GM12878 (cell line): ENCODE measurements at regions of chr6 and their contacts with region 1.

Region 1: GRCh38 chr6:122730775-122731386 is 48.6 kb upstream of the FABP7 start:
- DNase-seq: no peak
- ATAC-seq: peak; percentile 61
- H3K4me3 ChIP-seq: no peak overlapping the region
- H3K27ac ChIP-seq: no peak overlapping the region
- H3K4me1 ChIP-seq: no peaks in the 10 kb centered on the region
- H3K27me3 ChIP-seq: no peaks in the 10 kb centered on the region
- CTCF ChIP-seq: peak; percentile 61 to 77 (median 65)
- EP300 ChIP-seq: no peak
- POLR2A ChIP-seq: no peak
- RAD21 ChIP-seq: peak; percentile 86

Region 2: GRCh38 chr6:122530440-122531046 is 200.3 kb before region 1 on chr6:
- CTCF ChIA-PET with region 1: interaction called, 57 read pairs
- POLR2A ChIA-PET with region 1: no interaction called
- RAD21 ChIA-PET with region 1: interaction called, 14 read pairs
- SMC1A ChIA-PET with region 1: interaction called, 11 read pairs
- in situ Hi-C with region 1: no loop called
- intact Hi-C with region 1: loop called (anchors 1 kb)
- DNase-seq: peak; percentile 27
- ATAC-seq: peak; percentile 96
- H3K4me3 ChIP-seq: no peak overlapping the region
- H3K27ac ChIP-seq: no peak overlapping the region
- H3K4me1 ChIP-seq: no peaks in the 10 kb centered on the region
- H3K27me3 ChIP-seq: no peaks in the 10 kb centered on the region
- CTCF ChIP-seq: peak; percentile 89 to 94 (median 90)
- EP300 ChIP-seq: no peak
- POLR2A ChIP-seq: no peak
- RAD21 ChIP-seq: peak; percentile 96

Region 3: GRCh38 chr6:122696079-122696478 is 34.8 kb before region 1 on chr6:
- CTCF ChIA-PET with region 1: interaction called, 10 read pairs
- POLR2A ChIA-PET with region 1: no interaction called
- RAD21 ChIA-PET with region 1: interaction called, 4 read pairs
- SMC1A ChIA-PET with region 1: interaction called, 4 read pairs
- in situ Hi-C with region 1: no loop called
- intact Hi-C with region 1: no loop called
- DNase-seq: no peak
- ATAC-seq: no peak
- H3K4me3 ChIP-seq: no peak overlapping the region
- H3K27ac ChIP-seq: no peak overlapping the region
- H3K4me1 ChIP-seq: no peaks in the 10 kb centered on the region
- H3K27me3 ChIP-seq: no peaks in the 10 kb centered on the region
- CTCF ChIP-seq: no peak
- EP300 ChIP-seq: no peak
- POLR2A ChIP-seq: no peak
- RAD21 ChIP-seq: no peak

Region 4: GRCh38 chr6:122751326-122751725 is 20.4 kb after region 1 on chr6:
- CTCF ChIA-PET with region 1: interaction called, 133 read pairs
- POLR2A ChIA-PET with region 1: no interaction called
- RAD21 ChIA-PET with region 1: interaction called, 32 read pairs
- SMC1A ChIA-PET with region 1: interaction called, 45 read pairs
- in situ Hi-C with region 1: no loop called
- intact Hi-C with region 1: no loop called
- DNase-seq: no peak
- ATAC-seq: peak; percentile 75
- H3K4me3 ChIP-seq: no peak overlapping the region
- H3K27ac ChIP-seq: no peak overlapping the region
- H3K4me1 ChIP-seq: 0 out of 2 replicates have a peak, but pooled peaks cover 3% of the 10 kb centered on the region
- H3K27me3 ChIP-seq: no peaks in the 10 kb centered on the region
- CTCF ChIP-seq: no peak
- EP300 ChIP-seq: no peak
- POLR2A ChIP-seq: no peak
- RAD21 ChIP-seq: no peak

Region 5: DNA sequence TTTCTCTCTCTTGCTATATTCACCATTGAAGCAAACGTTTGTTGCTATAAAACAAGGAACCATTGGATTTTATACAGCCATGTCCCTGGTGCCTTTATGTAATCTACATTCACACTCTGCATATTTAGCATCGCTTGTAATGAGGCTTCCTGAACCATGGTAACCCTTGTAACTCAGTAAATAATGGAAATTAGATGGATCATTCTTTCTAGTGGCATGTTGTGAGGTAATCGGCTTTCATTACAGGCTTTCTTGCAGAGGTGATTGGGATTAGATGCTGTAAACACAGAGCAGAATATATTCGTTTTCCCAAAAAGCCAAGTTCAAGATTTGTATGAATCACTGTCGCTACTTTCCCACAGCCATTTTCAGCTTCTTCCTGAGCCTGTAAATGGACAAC is 94.3 kb after region 1 on chr6:
- CTCF ChIA-PET with region 1: interaction called, 12 read pairs
- POLR2A ChIA-PET with region 1: no interaction called
- RAD21 ChIA-PET with region 1: no interaction called
- SMC1A ChIA-PET with region 1: interaction called, 23 read pairs
- in situ Hi-C with region 1: no loop called
- intact Hi-C with region 1: no loop called
- DNase-seq: no peak
- ATAC-seq: no peak
- H3K4me3 ChIP-seq: no peak overlapping the region
- H3K27ac ChIP-seq: no peak overlapping the region
- H3K4me1 ChIP-seq: no peaks in the 10 kb centered on the region
- H3K27me3 ChIP-seq: no peaks in the 10 kb centered on the region; a peak in 1 of 4 replicates
- CTCF ChIP-seq: no peak
- EP300 ChIP-seq: no peak
- POLR2A ChIP-seq: no peak
- RAD21 ChIP-seq: no peak

Region 6: DNA sequence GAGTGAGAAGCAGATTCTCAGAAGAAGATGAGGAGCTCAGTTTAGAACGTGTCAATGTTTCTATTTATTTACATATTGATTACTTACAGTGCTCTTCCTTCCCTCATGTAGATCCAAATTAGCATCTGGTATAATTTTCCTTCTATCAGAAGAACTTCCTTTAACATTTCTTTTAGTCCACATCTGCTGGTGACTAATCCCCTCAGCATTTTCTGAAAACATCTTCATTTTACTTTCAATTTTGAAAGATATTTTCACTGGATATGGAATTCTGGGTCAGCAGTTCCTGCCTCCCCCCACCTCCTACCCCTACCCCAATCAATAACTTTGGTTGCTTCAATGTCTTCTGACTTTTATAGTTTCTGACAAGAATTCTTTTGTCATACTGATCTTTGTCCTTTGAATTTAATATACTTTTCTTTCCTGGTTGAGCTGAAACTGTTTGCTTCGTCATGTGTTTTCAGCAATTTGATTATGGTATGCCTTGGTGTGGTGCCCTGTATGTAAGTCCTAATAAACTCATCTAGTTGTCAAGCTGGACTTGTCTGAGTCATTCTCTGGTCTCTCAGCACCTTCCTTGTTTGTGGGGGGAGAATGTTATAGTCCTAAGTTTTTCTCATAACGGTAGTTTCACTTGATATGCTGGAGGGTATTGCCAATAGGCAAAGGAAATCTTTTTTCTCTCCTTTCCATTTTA is 115.2 kb after region 1 on chr6:
- CTCF ChIA-PET with region 1: interaction called, 7 read pairs
- POLR2A ChIA-PET with region 1: interaction called, 3 read pairs
- RAD21 ChIA-PET with region 1: interaction called, 4 read pairs
- SMC1A ChIA-PET with region 1: interaction called, 10 read pairs
- in situ Hi-C with region 1: no loop called
- intact Hi-C with region 1: no loop called
- DNase-seq: no peak
- ATAC-seq: peak; percentile 65
- H3K4me3 ChIP-seq: no peak overlapping the region
- H3K27ac ChIP-seq: no peak overlapping the region
- H3K4me1 ChIP-seq: no peaks in the 10 kb centered on the region
- H3K27me3 ChIP-seq: no peaks in the 10 kb centered on the region
- CTCF ChIP-seq: no peak
- EP300 ChIP-seq: no peak
- POLR2A ChIP-seq: no peak
- RAD21 ChIP-seq: no peak